Activated CD8-positive, alpha-beta memory T cell treated with anti-CD3 and anti-CD28 coated beads, Interleukin-2, amount 10 ng/mL, durations not matched to agents 7 days and 5 days (primary cell): ENCODE measurements at regions of chr15 and their contacts with region 1.

Region 1: GRCh38 chr15:66901336-66902100 is 163.9 kb upstream of the SMAD3 start:
- DNase-seq: no peak
- ATAC-seq: no peak
- H3K4me3 Mint-ChIP-seq: no peak overlapping the region
- H3K27ac Mint-ChIP-seq: peak overlapping the region; percentile 23
- H3K4me1 Mint-ChIP-seq: peaks cover 11% of the 10 kb centered on the region
- H3K27me3 Mint-ChIP-seq: peaks cover 10% of the 10 kb centered on the region

Region 2: DNA sequence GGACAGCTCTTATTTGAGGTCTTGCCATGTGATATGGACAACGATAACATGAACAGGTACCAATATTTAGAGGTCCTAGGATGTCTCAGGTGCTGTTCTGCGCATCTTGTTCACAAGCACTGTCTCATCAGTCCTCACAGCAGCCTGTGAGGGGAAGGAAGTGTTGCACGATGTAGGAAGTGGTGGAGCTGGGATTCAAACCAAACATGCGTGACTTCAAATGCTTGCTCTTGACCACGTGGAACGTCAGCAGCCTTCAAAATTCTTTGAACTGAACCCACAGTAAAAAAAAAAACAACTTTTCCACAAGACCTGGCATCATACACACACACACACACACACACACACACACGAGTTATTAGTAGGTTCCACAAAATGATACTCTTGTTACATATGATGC is 10.5 kb after region 1 on chr15:
- CTCF ChIA-PET with region 1: interaction called, 13 read pairs
- DNase-seq: peak; percentile 82
- ATAC-seq: peak; percentile 83
- H3K4me3 Mint-ChIP-seq: no peak overlapping the region
- H3K27ac Mint-ChIP-seq: peak overlapping the region; percentile 78
- H3K4me1 Mint-ChIP-seq: peaks cover 57% of the 10 kb centered on the region
- H3K27me3 Mint-ChIP-seq: peaks cover 25% of the 10 kb centered on the region